ENCODE measurements at regions of chr3 and their contacts with region 1.

Region 1: GRCh38 chr3:178325330-178325729 is 210.9 kb upstream of the KCNMB2 start:
- DNase-seq: no peak
- H3K4me3 ChIP-seq: no peak overlapping the region
- H3K27ac ChIP-seq: peak overlapping the region in 1 of 2 donors; percentile 14
- H3K4me1 ChIP-seq: no peaks in the 10 kb centered on the region
- H3K27me3 ChIP-seq: no peaks in the 10 kb centered on the region
- CTCF ChIP-seq: peak in 3 of 4 experiments; percentile 40 to 69 (median 65)
- POLR2A ChIP-seq: no peak

Region 2: GRCh38 chr3:177050501-177051237 is 1274.7 kb before region 1 on chr3:
- intact Hi-C with region 1: loop called (anchors 10 kb)
- DNase-seq: no peak
- H3K4me3 ChIP-seq: no peak overlapping the region
- H3K27ac ChIP-seq: no peak overlapping the region
- H3K4me1 ChIP-seq: peaks cover 10% of the 10 kb centered on the region
- H3K27me3 ChIP-seq: no peaks in the 10 kb centered on the region
- CTCF ChIP-seq: peak; percentile 22 to 79 (median 66)
- POLR2A ChIP-seq: no peak

Region 3: GRCh38 chr3:177835008-177835407 is 490.3 kb before region 1 on chr3:
- intact Hi-C with region 1: loop called (anchors 10 kb)
- DNase-seq: no peak
- H3K4me3 ChIP-seq: no peak overlapping the region
- H3K27ac ChIP-seq: no peak overlapping the region
- H3K4me1 ChIP-seq: no peaks in the 10 kb centered on the region
- H3K27me3 ChIP-seq: no peaks in the 10 kb centered on the region
- CTCF ChIP-seq: no peak
- POLR2A ChIP-seq: no peak

Region 4: DNA sequence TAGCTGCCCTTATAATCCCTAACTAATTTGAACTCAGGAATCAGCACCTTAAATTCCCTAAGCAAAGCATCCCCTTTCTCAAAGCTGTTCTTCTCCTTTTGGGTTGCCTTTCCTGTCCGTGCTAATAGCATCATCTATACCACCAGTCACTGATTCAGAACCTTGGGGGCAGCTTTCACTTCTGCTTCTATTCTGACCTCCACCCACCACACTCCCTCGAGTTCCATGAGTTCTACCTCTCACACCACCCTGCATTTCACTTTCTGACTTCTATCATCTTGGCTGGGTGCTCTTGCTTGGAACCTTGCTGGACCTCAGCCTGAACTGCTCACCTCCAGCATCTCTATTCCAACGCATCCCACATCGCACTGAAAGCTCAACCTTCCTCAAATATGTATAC is 155.5 kb after region 1 on chr3:
- intact Hi-C with region 1: no loop called
- DNase-seq: no peak
- H3K4me3 ChIP-seq: no peak overlapping the region
- H3K27ac ChIP-seq: no peak overlapping the region
- H3K4me1 ChIP-seq: no peaks in the 10 kb centered on the region
- H3K27me3 ChIP-seq: no peaks in the 10 kb centered on the region
- CTCF ChIP-seq: no peak
- POLR2A ChIP-seq: no peak